ENCODE measurements at regions of chr10 and their contacts with region 1.

Region 1: DNA sequence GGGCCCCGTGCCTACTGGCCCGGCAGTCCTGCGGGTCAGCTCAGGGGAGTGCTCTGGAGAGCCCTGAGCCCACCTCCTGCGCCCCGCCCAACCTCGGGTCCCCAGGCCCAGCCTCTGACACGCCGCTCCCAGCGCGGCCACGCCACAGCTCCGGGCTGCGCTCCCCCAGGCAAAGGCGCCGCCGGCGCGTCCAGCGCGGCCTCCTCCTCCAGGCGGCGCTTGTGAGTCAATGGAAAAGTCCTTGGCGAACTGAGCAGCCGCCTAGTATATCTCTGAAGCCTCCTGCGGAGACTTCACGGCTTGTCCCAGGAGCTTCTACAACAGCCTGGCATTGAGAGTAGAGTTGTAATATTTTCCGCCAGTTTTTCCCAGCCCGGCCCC is 29.5 kb upstream of the BMS1 start:
- DNase-seq: peak; percentile 82
- H3K4me3 Mint-ChIP-seq: peak overlapping the region; percentile 66
- H3K27ac Mint-ChIP-seq: no peak overlapping the region
- H3K4me1 Mint-ChIP-seq: peaks cover 6% of the 10 kb centered on the region
- H3K27me3 Mint-ChIP-seq: peaks cover 44% of the 10 kb centered on the region

Region 2: GRCh38 chr10:42543840-42544372 is 209.2 kb before region 1 on chr10:
- CTCF ChIA-PET with region 1: no interaction called
- POLR2A ChIA-PET with region 1: no interaction called
- intact Hi-C with region 1: no loop called
- DNase-seq: no peak
- H3K4me3 Mint-ChIP-seq: no peak overlapping the region
- H3K27ac Mint-ChIP-seq: no peak overlapping the region
- H3K4me1 Mint-ChIP-seq: peaks cover 16% of the 10 kb centered on the region
- H3K27me3 Mint-ChIP-seq: no peaks in the 10 kb centered on the region

Region 3: DNA sequence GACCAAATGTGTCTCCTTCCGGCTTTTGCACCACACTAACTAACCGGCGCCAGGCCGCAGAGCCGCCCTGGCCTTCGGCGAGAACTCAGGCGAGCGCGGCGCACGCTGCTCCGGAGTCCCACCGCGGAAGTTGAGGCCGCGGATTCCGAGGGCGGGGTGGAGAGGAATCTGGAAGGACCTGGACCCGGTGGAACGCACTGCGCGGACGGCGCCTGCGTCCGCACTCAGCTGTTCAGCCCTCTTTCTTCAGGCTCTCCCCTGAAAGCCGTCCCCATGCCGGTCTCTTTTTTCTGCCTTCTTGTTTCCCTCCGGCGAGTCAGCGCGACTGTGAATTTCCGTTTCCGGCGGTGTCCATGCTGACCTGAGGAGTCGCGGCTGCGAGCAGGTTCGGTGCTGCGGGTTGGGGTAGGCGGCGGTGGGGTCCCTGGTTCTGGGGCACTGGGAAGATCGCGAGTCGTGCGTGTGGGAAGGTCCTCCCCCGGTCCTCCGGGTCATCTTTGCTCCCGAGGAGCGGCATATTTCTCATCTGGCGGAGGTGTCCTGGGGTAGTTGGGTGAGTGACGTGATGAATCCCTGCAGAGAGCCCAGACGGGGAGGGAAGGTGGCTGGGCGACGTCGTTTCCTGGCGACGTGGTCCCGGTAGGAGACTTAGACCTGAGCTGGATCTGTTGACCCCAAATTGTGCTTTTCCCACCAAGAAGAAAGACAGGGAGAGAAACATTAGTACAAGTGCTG is 29.5 kb after region 1 on chr10 and contains the start of gene BMS1:
- CTCF ChIA-PET with region 1: interaction called, 7 read pairs
- POLR2A ChIA-PET with region 1: interaction called, 3 read pairs
- intact Hi-C with region 1: loop called (anchors 1 kb)
- DNase-seq: peak; percentile 94
- H3K4me3 Mint-ChIP-seq: peak within 1 kb of the TSS; percentile 85
- H3K27ac Mint-ChIP-seq: peak within 1 kb of the TSS; percentile 90
- H3K4me1 Mint-ChIP-seq: peaks cover 17% of the 10 kb centered on the region
- H3K27me3 Mint-ChIP-seq: peaks cover 1% of the 10 kb centered on the region
- total RNA-seq, gene BMS1: 25.5 to 25.9 TPM

Region 4: GRCh38 chr10:43105102-43105785 is 352.1 kb after region 1 on chr10:
- CTCF ChIA-PET with region 1: interaction called, 17 read pairs
- POLR2A ChIA-PET with region 1: no interaction called
- intact Hi-C with region 1: loop called (anchors 1 kb)
- DNase-seq: peak; percentile 85
- H3K4me3 Mint-ChIP-seq: peak overlapping the region; percentile 60
- H3K27ac Mint-ChIP-seq: no peak overlapping the region
- H3K4me1 Mint-ChIP-seq: peaks cover 6% of the 10 kb centered on the region
- H3K27me3 Mint-ChIP-seq: peaks cover 16% of the 10 kb centered on the region